ENCODE measurements at regions of chr1 and their contacts with region 1.

Region 1: GRCh38 chr1:25204797-25205480 is 27.4 kb downstream of the SYF2 start:
- DNase-seq: peak; percentile 17
- H3K4me3 ChIP-seq: no peak overlapping the region
- H3K27ac ChIP-seq: no peak overlapping the region
- H3K4me1 ChIP-seq: no peaks in the 10 kb centered on the region
- H3K27me3 ChIP-seq: no peaks in the 10 kb centered on the region
- CTCF ChIP-seq: peak; percentile 51 to 68

Region 2: GRCh38 chr1:24294757-24295371 is 910.1 kb before region 1 on chr1:
- CTCF ChIA-PET with region 1: no interaction called
- dilution Hi-C with region 1: no loop called
- in situ Hi-C with region 1: no loop called
- intact Hi-C with region 1: no loop called
- DNase-seq: peak; percentile 91
- H3K4me3 ChIP-seq: no peak overlapping the region
- H3K27ac ChIP-seq: peak overlapping the region; percentile 96
- H3K4me1 ChIP-seq: peaks cover 43% of the 10 kb centered on the region
- H3K27me3 ChIP-seq: no peaks in the 10 kb centered on the region
- CTCF ChIP-seq: peak in 1 of 2 donors; percentile 23

Region 3: DNA sequence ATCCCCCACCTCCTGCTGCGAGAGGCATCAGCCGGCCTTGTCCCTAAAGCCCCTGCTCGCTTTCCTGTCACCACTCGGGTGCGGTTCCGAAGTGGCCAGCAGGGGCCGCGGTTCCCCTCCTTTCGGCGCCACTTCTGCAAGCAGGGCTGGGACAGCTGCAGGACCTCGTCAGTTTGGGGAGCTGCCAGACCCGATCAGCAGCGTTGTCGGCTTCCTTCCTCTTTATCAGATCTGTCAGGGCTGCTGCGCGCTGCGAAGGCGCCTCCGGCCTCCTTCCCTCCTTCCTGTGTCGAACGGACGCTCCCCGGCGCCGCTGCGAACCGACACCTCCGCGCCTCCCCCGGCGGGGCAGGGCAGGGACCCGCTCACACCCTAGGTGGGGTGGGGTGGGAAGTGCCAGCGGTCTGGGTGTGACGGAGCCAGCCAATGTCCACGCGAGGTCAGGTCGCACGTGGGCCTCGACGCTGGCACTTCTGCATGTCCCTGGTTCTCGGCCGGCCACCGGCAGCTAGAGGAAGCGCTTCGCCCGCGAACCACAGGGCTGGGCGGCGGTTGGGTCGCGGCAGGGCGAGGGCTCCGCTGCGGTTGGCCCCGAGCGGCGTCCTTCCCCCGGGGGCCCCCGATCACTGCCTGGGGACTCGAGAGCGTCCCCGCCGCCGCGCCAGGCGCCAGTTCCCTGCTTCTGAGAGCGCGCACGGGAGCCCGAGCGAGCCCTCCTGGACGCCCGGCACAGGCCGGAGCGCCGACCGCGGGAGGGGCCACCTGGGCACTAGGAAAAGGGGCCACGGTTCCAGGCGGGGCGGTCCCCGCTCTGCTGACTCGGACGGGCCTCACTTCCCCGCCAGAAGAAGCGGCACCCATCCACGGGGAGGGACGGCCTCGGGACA is 356.7 kb before region 1 on chr1:
- CTCF ChIA-PET with region 1: no interaction called
- dilution Hi-C with region 1: no loop called
- in situ Hi-C with region 1: no loop called
- intact Hi-C with region 1: loop called (anchors 1 kb)
- DNase-seq: peak; percentile 54
- H3K4me3 ChIP-seq: peak overlapping the region; percentile 23 to 41 (median 41)
- H3K27ac ChIP-seq: no peak overlapping the region
- H3K4me1 ChIP-seq: peaks cover 11% of the 10 kb centered on the region
- H3K27me3 ChIP-seq: no peaks in the 10 kb centered on the region
- CTCF ChIP-seq: peak; percentile 58 to 95

Region 4: DNA sequence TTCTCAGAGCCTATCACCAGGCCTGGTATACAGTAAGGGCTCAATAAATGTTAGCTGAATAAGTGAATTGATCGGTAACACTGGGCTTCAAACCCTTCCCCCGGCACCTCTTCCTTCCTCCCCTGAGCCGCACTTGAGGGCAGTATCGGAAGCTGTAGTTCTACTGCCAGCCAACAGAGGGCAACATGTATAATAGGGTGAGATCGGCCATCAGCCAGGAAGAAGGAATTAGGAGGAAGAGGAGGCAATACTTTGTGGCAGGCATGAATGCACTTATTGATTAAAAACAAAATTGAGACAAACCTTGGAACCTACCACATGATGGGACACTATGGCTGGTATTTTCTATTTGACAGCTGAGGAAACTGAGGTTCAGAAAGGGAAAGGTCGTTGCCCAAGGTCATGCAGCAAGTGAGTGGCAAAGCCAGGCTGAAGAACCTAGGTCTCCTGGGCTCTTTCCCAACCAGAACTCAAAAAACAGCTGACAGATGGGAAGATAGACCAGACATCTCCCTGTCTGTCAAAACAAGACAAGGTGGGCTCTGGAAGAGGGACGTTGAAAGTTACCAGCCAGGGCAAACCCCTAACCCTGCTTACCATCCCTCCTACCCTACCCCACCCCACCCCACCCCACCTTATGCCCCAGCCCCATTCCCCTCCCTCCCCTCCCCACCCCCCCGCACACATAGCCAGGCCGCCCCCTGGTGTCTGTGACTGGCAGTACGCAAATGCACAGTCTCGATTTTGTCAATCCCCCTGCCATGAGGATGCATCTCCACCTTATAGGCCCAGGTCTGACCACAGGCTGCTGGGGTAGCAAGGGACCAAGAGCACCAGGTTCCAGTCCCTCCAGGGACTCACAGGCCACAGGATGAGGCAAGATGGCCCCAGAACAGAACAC is 167.5 kb before region 1 on chr1:
- CTCF ChIA-PET with region 1: no interaction called
- dilution Hi-C with region 1: loop called (anchors 5 kb)
- in situ Hi-C with region 1: no loop called
- intact Hi-C with region 1: loop called (anchors 1 kb)
- DNase-seq: no peak
- H3K4me3 ChIP-seq: no peak overlapping the region
- H3K27ac ChIP-seq: no peak overlapping the region
- H3K4me1 ChIP-seq: peaks cover 5% of the 10 kb centered on the region
- H3K27me3 ChIP-seq: no peaks in the 10 kb centered on the region
- CTCF ChIP-seq: peak; percentile 65 to 68

Region 5: DNA sequence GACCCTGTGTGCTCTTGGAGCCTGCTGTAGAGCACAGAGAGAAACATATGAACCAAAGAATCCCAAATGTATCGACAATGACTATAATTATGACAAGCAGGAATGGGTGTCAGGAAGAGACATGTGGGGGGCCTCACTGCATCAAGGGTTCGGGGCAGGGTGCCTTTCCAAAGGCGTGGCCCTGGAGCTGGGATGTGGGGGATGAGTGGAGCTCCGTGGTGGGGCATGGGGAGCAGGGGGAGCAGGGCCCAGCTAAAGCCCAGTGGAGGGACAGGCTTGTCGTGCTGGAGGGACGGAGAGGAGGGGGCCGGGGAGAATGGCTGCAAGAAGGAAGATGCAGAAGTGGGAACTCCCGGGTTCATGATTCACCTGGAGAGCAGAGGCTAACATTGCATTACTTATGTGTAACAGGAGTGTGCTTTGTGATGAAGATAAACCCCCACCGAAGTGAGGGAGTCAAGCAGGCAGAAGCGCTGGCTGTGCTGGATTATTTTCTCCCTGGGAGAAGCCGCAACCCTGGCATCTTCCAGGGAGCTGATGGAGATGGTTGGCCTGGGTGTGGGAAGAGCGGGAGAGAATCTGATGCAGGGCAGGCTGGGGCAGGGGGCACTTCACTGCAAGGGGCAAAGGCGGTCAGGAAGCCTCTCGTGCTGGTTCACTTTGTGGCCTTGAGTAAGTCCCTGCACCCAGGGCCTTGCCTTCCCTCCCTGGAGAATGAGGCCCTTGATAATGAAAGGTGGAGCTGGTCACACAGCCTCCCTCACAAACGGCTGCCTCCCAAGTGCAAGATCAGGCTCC is 150.2 kb before region 1 on chr1:
- CTCF ChIA-PET with region 1: no interaction called
- dilution Hi-C with region 1: no loop called
- in situ Hi-C with region 1: no loop called
- intact Hi-C with region 1: no loop called
- DNase-seq: no peak
- H3K4me3 ChIP-seq: no peak overlapping the region
- H3K27ac ChIP-seq: no peak overlapping the region
- H3K4me1 ChIP-seq: peaks cover 4% of the 10 kb centered on the region
- H3K27me3 ChIP-seq: no peaks in the 10 kb centered on the region
- CTCF ChIP-seq: no peak

Region 6: DNA sequence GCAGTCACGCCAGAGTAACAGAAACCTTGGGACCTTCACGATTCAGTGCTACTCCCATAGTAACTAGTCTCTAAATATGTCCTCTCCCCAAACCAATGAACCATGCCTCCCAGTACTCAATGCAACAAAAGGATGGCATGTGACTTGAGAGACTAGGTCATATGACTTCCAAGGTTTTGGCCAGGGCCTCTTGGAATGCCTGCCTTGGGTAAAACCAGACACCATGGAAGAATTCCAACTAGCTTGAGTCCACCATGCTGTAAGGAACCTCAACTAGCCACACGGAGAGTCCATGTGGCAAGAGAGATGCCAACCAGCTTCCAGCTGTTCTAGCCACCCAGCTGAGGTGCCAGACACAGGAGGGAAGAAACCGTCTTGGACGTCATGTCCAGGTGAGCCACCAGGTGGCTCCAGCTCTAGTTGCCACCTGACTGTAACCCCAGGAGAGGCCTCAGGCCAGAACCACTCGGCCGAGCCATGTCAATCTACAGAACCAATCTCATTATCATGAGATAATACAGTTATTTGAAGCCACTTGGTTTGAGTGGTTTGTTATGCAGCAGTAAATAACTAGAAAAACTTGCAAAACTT is 87.6 kb before region 1 on chr1:
- CTCF ChIA-PET with region 1: no interaction called
- dilution Hi-C with region 1: loop called (anchors 10 kb)
- in situ Hi-C with region 1: loop called in 1 of 2 experiments (anchors 5 kb)
- intact Hi-C with region 1: loop called (anchors 1 kb)
- DNase-seq: peak; percentile 33
- H3K4me3 ChIP-seq: no peak overlapping the region
- H3K27ac ChIP-seq: no peak overlapping the region
- H3K4me1 ChIP-seq: no peaks in the 10 kb centered on the region
- H3K27me3 ChIP-seq: peaks cover 4% of the 10 kb centered on the region
- CTCF ChIP-seq: peak; percentile 53 to 60

Region 7: GRCh38 chr1:25148673-25149300 is 56.2 kb before region 1 on chr1:
- CTCF ChIA-PET with region 1: no interaction called
- dilution Hi-C with region 1: no loop called
- in situ Hi-C with region 1: no loop called
- intact Hi-C with region 1: loop called (anchors 1 kb)
- DNase-seq: peak; percentile 24
- H3K4me3 ChIP-seq: no peak overlapping the region
- H3K27ac ChIP-seq: no peak overlapping the region
- H3K4me1 ChIP-seq: peaks cover 8% of the 10 kb centered on the region
- H3K27me3 ChIP-seq: no peaks in the 10 kb centered on the region
- CTCF ChIP-seq: peak; percentile 42 to 63